Activated CD4-positive, alpha-beta T cell treated with anti-CD3 and anti-CD28 coated beads, Interleukin-2, amount 10 ng/mL, durations not matched to agents 24 days and 14 days (primary cell): ENCODE measurements at regions of chr11 and their contacts with region 1.

Region 1: DNA sequence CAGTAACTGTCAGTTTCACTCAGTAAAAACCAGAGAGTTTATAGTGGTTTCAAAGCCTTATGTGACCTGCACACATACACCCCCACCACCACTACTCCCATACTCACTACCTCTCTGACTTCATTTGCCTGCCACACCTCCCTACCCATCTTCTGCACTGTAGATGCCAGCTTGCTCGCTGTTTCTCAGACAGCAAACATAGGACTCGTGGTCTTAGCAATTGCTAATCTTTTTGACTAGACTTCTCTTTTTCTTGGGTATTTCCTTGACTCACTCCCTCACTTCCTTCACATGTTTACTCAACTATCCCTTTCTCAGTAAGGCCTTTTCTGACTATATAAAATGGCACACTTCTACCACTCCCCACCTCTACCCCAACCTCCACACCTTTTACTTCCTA is 27.8 kb downstream of the CEP295 start:
- DNase-seq: no peak
- H3K4me3 Mint-ChIP-seq: no peak overlapping the region
- H3K27ac Mint-ChIP-seq: peak overlapping the region; percentile 77
- H3K4me1 Mint-ChIP-seq: peaks cover 22% of the 10 kb centered on the region
- H3K27me3 Mint-ChIP-seq: no peaks in the 10 kb centered on the region

Region 2: GRCh38 chr11:93668171-93668570 is 21.1 kb before region 1 on chr11:
- intact Hi-C with region 1: loop called (anchors 2 kb)
- DNase-seq: peak; percentile 16
- H3K4me3 Mint-ChIP-seq: no peak overlapping the region
- H3K27ac Mint-ChIP-seq: peak overlapping the region; percentile 7
- H3K4me1 Mint-ChIP-seq: peaks cover 33% of the 10 kb centered on the region
- H3K27me3 Mint-ChIP-seq: no peaks in the 10 kb centered on the region